GM10248 (cell line): ENCODE measurements at regions of chr5 and their contacts with region 1.

Region 1: GRCh38 chr5:43484106-43484849 is 613 bp upstream of the TMEM267 start:
- DNase-seq: peak; percentile 77
- CTCF ChIP-seq: peak; percentile 78

Region 2: GRCh38 chr5:43268188-43268820 is 216.0 kb before region 1 on chr5:
- CTCF ChIA-PET with region 1: no interaction called
- POLR2A ChIA-PET with region 1: no interaction called
- DNase-seq: no peak
- CTCF ChIP-seq: no peak

Region 3: GRCh38 chr5:43313035-43313853 is 171.0 kb before region 1 on chr5 and contains the start of gene HMGCS1:
- CTCF ChIA-PET with region 1: interaction called, 12 read pairs
- POLR2A ChIA-PET with region 1: interaction called, 13 read pairs
- DNase-seq: peak; percentile 97
- CTCF ChIP-seq: no peak

Region 4: DNA sequence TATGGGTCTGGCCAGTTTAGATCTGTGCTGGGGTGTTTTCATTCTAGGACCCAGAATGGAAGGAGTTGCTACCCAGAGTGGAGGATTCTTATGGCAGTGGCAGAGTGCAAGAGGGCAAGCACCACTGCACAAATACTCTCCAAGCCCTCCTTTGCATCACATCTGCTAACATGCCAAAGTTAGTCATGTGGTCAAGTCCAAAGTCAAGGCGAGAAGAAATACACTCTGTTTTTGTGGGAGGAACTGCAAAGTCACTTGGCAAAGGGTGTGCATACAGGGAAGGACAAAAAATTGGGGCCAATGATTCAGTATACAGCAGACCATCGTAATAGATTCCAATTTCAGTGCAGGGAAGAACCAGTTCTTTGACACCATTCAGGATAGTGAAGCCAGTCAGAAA is 127.2 kb before region 1 on chr5:
- CTCF ChIA-PET with region 1: no interaction called
- POLR2A ChIA-PET with region 1: no interaction called
- DNase-seq: no peak
- CTCF ChIP-seq: no peak

Region 5: DNA sequence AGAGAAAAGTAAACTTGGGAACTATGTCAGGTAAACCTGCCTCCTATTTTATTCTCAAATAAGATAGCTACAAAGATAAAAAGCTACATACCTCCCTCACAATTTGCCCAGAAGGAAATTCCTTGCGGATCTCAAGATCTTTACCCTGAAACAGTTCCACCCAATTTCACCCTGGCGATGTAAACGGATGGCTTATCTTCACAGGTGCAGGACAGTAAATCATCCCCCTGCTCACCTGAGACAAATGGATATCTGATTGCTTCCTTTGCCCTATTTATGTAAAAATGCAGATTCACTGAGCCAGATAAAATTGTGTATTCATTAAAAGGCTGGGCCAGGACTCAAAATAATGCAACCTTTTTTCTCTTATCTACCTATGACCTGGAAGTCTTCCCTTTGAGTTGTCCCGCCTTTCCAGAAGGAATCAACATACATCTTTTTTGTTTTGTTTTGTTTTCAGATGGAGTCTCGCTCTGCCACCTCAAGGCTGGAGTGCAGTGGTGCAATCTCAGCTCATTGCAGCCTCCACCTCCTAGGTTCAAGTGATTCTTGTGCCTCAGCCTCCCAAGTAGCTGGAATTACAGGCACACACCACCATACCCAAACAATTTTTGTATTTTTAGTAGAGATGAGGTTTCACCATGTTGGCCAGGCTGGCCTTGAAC is 14.4 kb before region 1 on chr5:
- CTCF ChIA-PET with region 1: interaction called, 30 read pairs
- POLR2A ChIA-PET with region 1: interaction called, 3 read pairs
- DNase-seq: no peak
- CTCF ChIP-seq: no peak

Region 6: DNA sequence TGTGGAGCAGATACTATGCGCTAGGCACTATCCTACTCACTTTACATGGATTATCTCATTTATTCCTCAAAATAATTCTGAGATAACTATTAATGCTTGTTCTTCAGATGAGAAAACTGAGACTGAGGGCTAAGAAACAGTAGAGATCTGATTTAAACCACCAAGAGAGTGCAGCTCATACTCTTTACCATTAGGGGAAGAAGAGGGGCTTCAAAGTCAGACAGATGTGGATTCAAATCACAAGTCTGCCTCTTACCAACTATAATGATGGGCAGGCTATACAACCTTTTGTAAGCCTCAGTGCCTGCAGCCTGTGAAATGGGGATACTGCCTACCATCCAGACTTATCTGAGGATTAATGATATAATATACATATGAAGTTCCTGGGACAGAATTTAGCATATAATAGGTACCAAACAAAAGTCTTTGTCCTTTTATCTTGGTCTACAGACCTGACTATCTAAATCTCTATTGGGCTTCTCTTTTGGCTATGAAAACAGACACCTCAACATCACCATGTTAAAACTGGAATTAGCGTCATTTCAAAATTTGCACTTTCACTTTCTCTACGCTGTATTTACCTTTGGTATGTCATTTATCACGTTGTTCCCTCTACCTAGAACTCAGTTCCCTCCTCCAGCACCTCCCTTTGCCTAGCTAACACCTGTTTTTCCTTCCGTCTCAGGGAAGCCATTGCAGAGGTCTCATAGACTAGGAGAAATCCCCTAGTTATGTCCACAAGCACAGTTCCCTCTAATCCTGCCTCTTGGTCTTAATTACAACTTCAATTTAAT is 13.2 kb after region 1 on chr5:
- CTCF ChIA-PET with region 1: interaction called, 26 read pairs
- POLR2A ChIA-PET with region 1: no interaction called
- DNase-seq: no peak
- CTCF ChIP-seq: no peak

Region 7: DNA sequence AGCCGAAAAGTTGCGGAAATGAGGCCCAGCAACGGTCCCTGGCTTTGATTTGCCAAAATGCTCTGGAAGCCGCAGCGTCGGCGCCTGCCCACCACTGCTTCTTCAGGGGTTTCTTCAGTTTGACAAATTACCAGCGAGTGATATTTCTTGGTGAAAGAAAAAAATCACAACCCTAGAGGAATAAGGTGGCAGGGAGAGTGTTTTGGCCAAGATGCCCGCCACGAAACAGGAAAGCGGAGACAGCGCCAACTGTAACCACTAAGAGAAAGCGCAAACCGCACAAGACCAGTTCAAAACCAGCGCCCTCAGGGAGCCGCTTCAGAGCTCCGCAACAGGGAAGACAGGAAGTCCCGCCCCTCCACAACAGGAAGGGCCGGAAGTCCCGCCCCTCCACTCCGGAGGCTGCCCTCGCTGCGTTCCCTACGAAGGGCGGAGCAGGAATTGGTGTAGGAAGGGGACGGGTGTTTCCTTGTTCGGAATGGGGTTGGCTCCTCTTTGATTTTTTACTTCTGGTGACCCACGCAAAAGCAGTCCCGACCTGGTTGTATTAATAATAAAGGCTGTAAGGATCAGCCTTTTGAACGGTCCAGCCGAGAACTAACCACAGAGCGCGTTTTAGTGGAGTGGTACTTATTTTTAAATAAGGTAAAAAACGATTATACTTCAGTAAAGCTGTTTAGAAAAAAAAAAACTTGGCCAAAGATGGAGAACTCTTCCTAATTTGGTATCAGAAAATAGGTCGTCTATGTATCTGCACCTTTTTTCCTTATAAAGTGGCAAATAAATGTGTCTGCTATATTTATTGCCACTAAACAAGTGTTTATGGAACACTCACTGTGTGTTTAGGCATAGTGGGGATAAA is 30.8 kb after region 1 on chr5 and contains the start of gene C5orf34:
- CTCF ChIA-PET with region 1: interaction called, 13 read pairs
- POLR2A ChIA-PET with region 1: interaction called, 10 read pairs
- DNase-seq: peak; percentile 96
- CTCF ChIP-seq: no peak

Region 8: DNA sequence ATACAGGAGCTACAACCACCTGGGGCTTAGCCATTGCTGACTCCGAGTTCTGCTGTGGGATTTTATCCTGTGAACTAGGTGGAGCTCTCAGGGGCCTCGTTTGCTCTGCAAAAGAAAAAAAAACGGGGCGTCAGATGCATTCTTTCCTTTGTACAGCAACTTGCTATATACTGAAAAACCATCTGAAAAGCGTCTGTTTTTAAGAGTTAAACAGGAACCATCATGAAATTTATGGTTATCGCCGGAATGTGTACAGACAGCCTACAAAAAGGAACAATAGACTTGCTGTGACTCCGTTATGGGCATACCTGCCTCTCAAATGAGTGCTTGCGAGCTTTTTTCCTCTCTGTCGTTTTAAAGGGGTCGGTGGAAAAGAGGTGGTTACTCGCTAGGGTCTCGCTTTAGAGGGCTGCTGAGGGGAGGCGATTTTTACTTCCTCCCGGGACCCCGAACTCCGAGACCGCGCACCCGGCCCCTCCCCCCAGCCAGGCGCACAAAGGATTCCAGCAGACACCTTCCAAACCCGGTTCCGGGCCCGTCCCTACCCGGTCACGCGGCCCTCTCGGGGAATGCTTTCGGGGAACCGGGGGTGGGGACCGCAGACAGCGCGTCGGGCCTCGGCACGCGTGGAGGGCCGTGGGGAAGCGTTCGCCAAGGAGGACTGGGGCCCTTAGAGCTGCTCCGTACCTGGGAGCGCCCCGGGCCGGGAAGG is 71.8 kb after region 1 on chr5:
- CTCF ChIA-PET with region 1: interaction called, 16 read pairs
- POLR2A ChIA-PET with region 1: interaction called, 4 read pairs
- DNase-seq: peak; percentile 41
- CTCF ChIP-seq: no peak